Activated CD8-positive, alpha-beta T cell treated with anti-CD3 and anti-CD28 coated beads, Interleukin-2, amount 10 ng/mL, durations not matched to agents 7 days and 5 days (primary cell): ENCODE measurements at regions of chr6 and their contacts with region 1.

Region 1: GRCh38 chr6:10722820-10723566 is at the start of gene TMEM14C:
- DNase-seq: peak; percentile 87
- ATAC-seq: peak; percentile 92
- H3K4me3 Mint-ChIP-seq: peak within 1 kb of the TSS; percentile 91
- H3K27ac Mint-ChIP-seq: peak within 1 kb of the TSS; percentile 90
- H3K4me1 Mint-ChIP-seq: peaks cover 58% of the 10 kb centered on the region
- H3K27me3 Mint-ChIP-seq: no peaks in the 10 kb centered on the region
- total RNA-seq, gene TMEM14C: 35.9 to 39.2 TPM

Region 2: GRCh38 chr6:10177703-10178102 is 545.3 kb before region 1 on chr6:
- CTCF ChIA-PET with region 1: no interaction called
- POLR2A ChIA-PET with region 1: no interaction called
- DNase-seq: no peak
- ATAC-seq: no peak
- H3K4me3 Mint-ChIP-seq: no peak overlapping the region
- H3K27ac Mint-ChIP-seq: no peak overlapping the region
- H3K4me1 Mint-ChIP-seq: no peaks in the 10 kb centered on the region
- H3K27me3 Mint-ChIP-seq: no peaks in the 10 kb centered on the region

Region 3: DNA sequence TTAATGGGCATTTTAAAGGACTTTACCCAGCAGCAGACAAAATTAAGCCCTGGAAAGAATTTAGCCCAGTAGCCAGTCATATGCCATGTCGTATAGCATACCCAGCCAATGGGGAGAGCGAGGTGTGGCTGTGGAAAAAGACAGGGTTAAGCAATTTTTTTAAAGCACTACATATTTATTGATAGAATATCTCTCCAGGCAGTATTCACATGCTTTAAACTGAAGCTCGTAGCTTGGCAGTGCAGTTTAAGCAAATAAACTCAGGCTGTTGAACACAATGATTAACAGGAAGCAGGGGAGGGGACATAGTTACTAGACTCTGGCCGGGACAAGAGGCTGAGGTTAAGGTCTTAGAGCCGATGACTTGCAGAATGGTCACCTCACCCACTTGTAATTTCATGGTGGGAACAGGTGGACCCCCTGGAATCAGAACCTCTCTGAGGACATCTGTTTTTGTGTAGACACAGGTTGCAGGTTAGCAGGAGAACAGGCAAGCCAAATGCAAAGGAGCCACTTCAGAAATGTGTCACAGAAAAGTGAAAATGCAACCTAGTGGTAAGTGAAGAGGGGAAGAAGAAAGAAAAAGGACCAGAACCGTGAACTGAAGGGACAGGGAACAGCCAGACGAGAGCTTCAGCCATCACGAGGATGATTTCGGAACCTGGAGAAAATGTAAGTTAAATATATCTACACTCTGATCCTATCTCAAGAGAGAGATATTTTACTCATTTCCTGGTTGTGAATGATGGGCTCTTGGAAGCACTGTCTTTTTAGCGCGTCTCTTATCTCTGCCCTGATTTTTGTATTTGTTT is 194.6 kb before region 1 on chr6:
- CTCF ChIA-PET with region 1: no interaction called
- POLR2A ChIA-PET with region 1: interaction called, 11 read pairs
- DNase-seq: peak; percentile 42
- ATAC-seq: peak; percentile 74
- H3K4me3 Mint-ChIP-seq: peak overlapping the region; percentile 80
- H3K27ac Mint-ChIP-seq: peak overlapping the region; percentile 88
- H3K4me1 Mint-ChIP-seq: peaks cover 46% of the 10 kb centered on the region
- H3K27me3 Mint-ChIP-seq: peaks cover 2% of the 10 kb centered on the region

Region 4: DNA sequence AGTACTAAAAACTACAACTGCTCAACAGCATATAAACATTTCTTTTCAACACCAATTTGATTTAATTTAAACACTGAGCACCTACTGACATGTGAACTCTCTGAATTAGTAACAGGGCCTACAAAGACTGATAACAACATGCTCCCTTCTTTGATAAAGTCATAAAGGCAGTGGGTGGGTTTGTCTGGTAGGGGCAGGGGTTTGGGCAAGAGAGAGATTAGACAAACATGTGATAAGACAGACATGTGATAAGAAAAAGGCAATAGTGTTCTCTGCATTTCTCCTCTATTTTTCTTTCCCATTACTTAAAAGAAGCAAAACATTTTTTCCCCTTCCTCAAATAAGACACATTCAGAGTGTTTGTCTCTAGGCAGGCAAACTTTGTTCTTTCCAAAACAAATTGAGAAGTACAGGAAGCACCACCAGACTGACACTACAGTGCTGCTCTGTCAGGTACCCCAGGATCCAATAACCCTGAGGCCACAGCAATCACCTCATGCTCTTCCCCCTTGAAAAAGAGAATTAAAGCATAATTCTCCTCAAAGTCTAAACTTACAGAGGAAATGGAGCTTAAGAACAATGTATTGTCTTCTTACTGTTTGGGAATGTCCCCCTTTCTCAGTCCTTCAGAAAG is 40.5 kb before region 1 on chr6:
- CTCF ChIA-PET with region 1: no interaction called
- POLR2A ChIA-PET with region 1: no interaction called
- DNase-seq: no peak
- ATAC-seq: peak; percentile 64
- H3K4me3 Mint-ChIP-seq: no peak overlapping the region
- H3K27ac Mint-ChIP-seq: peak overlapping the region; percentile 71
- H3K4me1 Mint-ChIP-seq: peaks cover 40% of the 10 kb centered on the region
- H3K27me3 Mint-ChIP-seq: no peaks in the 10 kb centered on the region

Region 5: DNA sequence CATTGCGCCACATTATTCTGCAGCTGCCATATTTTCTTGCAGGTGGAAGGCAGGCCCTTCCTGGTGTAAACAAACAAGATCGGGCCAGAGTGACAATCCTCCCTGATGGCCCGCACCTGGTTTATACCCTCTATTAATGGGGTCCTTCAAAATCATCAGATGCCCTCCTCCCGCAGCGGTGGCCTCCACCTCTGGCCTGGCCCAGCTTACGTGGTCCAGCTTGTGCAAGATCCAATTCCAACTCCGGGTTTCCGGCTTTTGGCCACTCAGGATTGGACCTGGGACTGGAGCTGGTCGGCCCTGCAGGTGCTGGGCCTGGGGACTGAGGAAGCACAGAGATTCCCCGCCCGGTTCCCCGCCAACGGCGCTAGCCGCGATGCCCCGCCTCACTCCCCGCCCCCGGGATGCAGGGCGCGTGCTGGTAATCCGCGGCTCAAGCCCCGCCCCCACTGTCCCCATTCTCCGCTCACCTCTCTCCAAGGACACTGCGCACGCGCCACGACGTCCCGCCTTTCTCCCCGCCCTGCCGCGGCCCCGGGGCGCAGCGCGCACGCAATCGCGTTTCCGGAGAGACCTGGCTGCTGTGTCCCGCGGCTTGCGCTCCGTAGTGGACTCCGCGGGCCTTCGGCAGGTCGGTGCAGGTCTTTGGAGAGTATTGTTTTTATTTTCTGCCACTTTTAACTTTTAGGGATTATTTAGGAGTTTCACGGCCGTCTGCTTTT is 24.4 kb after region 1 on chr6 and contains the start of gene TMEM14B:
- CTCF ChIA-PET with region 1: interaction called, 6 read pairs
- POLR2A ChIA-PET with region 1: interaction called, 39 read pairs
- DNase-seq: peak; percentile 100
- ATAC-seq: peak; percentile 97
- H3K4me3 Mint-ChIP-seq: peak within 1 kb of the TSS; percentile 96
- H3K27ac Mint-ChIP-seq: peak within 1 kb of the TSS; percentile 95
- H3K4me1 Mint-ChIP-seq: peaks cover 45% of the 10 kb centered on the region
- H3K27me3 Mint-ChIP-seq: no peaks in the 10 kb centered on the region
- total RNA-seq, gene TMEM14B: 85.7 to 92.6 TPM

Region 6: GRCh38 chr6:10793695-10794094 is 70.7 kb after region 1 on chr6:
- CTCF ChIA-PET with region 1: no interaction called
- POLR2A ChIA-PET with region 1: no interaction called
- DNase-seq: no peak
- ATAC-seq: no peak
- H3K4me3 Mint-ChIP-seq: no peak overlapping the region
- H3K27ac Mint-ChIP-seq: no peak overlapping the region
- H3K4me1 Mint-ChIP-seq: no peaks in the 10 kb centered on the region
- H3K27me3 Mint-ChIP-seq: no peaks in the 10 kb centered on the region